Activated CD4-positive, alpha-beta memory T cell treated with anti-CD3 and anti-CD28 coated beads for 36 hours (primary cell): ENCODE measurements at regions of chr12 and their contacts with region 1.

Region 1: DNA sequence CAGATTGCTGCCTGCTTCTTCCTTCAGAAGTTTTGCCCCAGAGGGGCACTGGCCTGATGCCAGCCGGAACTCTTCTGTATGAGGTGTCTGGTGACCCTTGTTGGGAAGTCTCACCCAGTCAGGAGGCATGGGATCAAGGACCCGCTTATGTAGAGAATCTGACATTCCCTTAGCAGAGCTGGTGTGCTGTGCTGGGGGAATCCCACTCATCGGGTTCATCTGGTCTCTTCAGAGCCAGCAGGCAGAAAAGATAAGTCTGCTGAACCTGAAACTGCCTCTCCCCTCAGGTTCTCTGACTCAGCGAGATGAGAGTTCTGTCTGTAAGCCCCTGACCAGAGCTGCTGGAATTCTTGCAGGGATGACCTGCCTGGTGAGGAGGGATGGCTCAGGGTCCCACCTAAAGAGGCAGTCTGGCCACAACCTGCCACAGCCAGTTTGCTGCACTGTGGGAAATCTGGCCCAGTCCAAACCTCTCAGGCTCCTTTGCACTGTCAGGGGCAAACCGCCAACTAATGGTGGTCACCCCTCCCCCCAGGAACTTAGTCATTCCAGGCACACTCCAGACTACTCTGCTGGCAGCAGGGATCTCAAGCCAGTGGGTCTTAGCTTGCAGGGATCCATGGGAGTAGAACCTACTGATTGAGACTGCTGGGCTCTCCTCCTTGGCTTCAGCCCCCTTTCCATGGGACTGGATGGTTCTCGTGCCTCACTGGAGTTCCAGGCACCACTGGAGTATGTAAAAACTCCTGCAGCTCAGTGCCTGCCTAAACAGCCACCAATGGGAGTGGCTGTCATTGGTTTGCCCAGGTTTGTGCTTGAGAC is 4.1 kb downstream of the CLEC2D start:
- DNase-seq: peak; percentile 88
- H3K4me3 Mint-ChIP-seq: peak overlapping the region; percentile 93
- H3K27ac Mint-ChIP-seq: peak overlapping the region; percentile 98
- H3K4me1 Mint-ChIP-seq: peaks cover 41% of the 10 kb centered on the region
- H3K27me3 Mint-ChIP-seq: no peaks in the 10 kb centered on the region

Region 2: GRCh38 chr12:9144730-9145106 is 528.9 kb before region 1 on chr12:
- CTCF ChIA-PET with region 1: no interaction called
- POLR2A ChIA-PET with region 1: no interaction called
- intact Hi-C with region 1: no loop called
- DNase-seq: no peak
- H3K4me3 Mint-ChIP-seq: no peak overlapping the region
- H3K27ac Mint-ChIP-seq: no peak overlapping the region
- H3K4me1 Mint-ChIP-seq: peaks cover 17% of the 10 kb centered on the region
- H3K27me3 Mint-ChIP-seq: no peaks in the 10 kb centered on the region

Region 3: DNA sequence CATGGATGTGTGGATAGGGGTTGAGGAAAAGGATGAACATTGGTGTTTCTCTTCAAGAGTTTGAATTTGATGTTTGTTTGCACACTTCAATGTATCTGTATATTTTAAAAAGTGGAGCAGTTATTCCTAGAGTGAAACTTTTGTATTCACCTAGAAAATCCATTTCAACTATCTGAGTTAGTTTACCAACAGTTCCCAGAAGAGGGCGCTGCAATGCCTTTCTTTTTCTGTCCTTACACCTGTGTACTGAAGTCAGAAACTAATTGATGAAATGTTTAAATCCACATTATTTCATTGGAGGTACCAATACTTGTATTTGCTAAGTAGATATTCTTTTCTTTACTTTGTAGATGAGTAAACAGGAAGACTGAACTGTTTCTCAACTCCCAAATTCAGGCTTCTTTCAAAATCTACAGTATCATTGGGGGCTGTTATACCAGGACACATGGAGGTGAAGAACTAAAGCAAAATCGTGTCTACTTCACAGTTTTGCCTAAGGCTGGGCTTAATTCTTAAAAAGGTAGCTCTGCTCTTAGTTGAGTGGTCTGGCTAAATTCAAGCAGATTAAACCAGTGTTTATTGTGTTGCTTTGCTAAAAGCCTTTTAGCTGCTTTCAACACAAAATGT is 39.3 kb before region 1 on chr12:
- CTCF ChIA-PET with region 1: interaction called, 16 read pairs
- POLR2A ChIA-PET with region 1: no interaction called
- intact Hi-C with region 1: loop called (anchors 1 kb)
- DNase-seq: peak; percentile 81
- H3K4me3 Mint-ChIP-seq: no peak overlapping the region
- H3K27ac Mint-ChIP-seq: peak overlapping the region; percentile 66
- H3K4me1 Mint-ChIP-seq: peaks cover 60% of the 10 kb centered on the region
- H3K27me3 Mint-ChIP-seq: no peaks in the 10 kb centered on the region

Region 4: DNA sequence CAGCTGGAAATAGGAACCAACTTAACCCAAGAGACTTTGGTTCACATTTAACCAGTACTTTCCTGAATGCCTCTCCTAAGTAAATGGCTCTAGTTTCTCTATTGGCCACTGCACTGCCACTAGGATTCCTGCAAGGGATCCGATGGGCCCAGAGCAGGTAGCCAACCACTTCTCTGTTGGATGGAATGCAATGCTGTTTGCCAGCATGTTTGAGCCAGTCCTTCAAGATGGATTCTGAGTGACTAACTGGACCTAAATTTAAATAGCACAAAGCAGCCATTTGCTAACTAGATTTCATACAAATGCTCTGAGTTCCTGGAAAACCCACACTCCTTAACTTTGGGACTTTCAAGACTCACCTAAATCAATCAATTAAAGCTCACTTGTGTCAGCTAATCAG is 13.6 kb before region 1 on chr12:
- CTCF ChIA-PET with region 1: interaction called, 5 read pairs
- POLR2A ChIA-PET with region 1: interaction called, 471 read pairs
- intact Hi-C with region 1: no loop called
- DNase-seq: no peak
- H3K4me3 Mint-ChIP-seq: no peak overlapping the region
- H3K27ac Mint-ChIP-seq: peak overlapping the region; percentile 79
- H3K4me1 Mint-ChIP-seq: peaks cover 96% of the 10 kb centered on the region
- H3K27me3 Mint-ChIP-seq: no peaks in the 10 kb centered on the region

Region 5: GRCh38 chr12:9702255-9702654 is 28.6 kb after region 1 on chr12:
- CTCF ChIA-PET with region 1: interaction called, 6 read pairs
- POLR2A ChIA-PET with region 1: interaction called, 7 read pairs
- intact Hi-C with region 1: loop called (anchors 2 kb)
- DNase-seq: peak; percentile 78
- H3K4me3 Mint-ChIP-seq: peak overlapping the region; percentile 66
- H3K27ac Mint-ChIP-seq: peak overlapping the region; percentile 87
- H3K4me1 Mint-ChIP-seq: peaks cover 74% of the 10 kb centered on the region
- H3K27me3 Mint-ChIP-seq: no peaks in the 10 kb centered on the region

Region 6: GRCh38 chr12:9732921-9733461 is 59.4 kb after region 1 on chr12 and contains the start of gene CLECL1:
- CTCF ChIA-PET with region 1: no interaction called
- POLR2A ChIA-PET with region 1: interaction called, 13 read pairs
- intact Hi-C with region 1: no loop called
- DNase-seq: no peak
- H3K4me3 Mint-ChIP-seq: peak within 1 kb of the TSS; percentile 83
- H3K27ac Mint-ChIP-seq: peak within 1 kb of the TSS; percentile 93
- H3K4me1 Mint-ChIP-seq: peaks cover 50% of the 10 kb centered on the region
- H3K27me3 Mint-ChIP-seq: no peaks in the 10 kb centered on the region
- total RNA-seq, gene CLECL1: 6.5 to 7.4 TPM

Region 7: GRCh38 chr12:9797722-9798619 is 124.4 kb after region 1 on chr12:
- CTCF ChIA-PET with region 1: no interaction called
- POLR2A ChIA-PET with region 1: interaction called, 12 read pairs
- intact Hi-C with region 1: no loop called
- DNase-seq: peak; percentile 77
- H3K4me3 Mint-ChIP-seq: no peak overlapping the region
- H3K27ac Mint-ChIP-seq: peak overlapping the region; percentile 54
- H3K4me1 Mint-ChIP-seq: peaks cover 44% of the 10 kb centered on the region
- H3K27me3 Mint-ChIP-seq: no peaks in the 10 kb centered on the region